ENCODE measurements at regions of chr17 and their contacts with region 1.

Region 1: GRCh38 chr17:63798572-63799106 is 24.7 kb downstream of the DDX42 start:
- DNase-seq: no peak
- ATAC-seq: no peak
- H3K4me3 ChIP-seq: no peak overlapping the region
- H3K27ac ChIP-seq: no peak overlapping the region
- H3K4me1 ChIP-seq: no peaks in the 10 kb centered on the region
- H3K27me3 ChIP-seq: no peaks in the 10 kb centered on the region
- CTCF ChIP-seq: no peak
- EP300 ChIP-seq: no peak
- POLR2A ChIP-seq: no peak
- RAD21 ChIP-seq: no peak

Region 2: GRCh38 chr17:63809970-63810369 is 11.3 kb after region 1 on chr17:
- CTCF ChIA-PET with region 1: no interaction called
- POLR2A ChIA-PET with region 1: interaction called, 10 read pairs
- in situ Hi-C with region 1: no loop called
- intact Hi-C with region 1: no loop called
- DNase-seq: no peak
- ATAC-seq: no peak
- H3K4me3 ChIP-seq: no peak overlapping the region
- H3K27ac ChIP-seq: no peak overlapping the region
- H3K4me1 ChIP-seq: no peaks in the 10 kb centered on the region
- H3K27me3 ChIP-seq: no peaks in the 10 kb centered on the region
- CTCF ChIP-seq: no peak
- EP300 ChIP-seq: no peak
- POLR2A ChIP-seq: no peak
- RAD21 ChIP-seq: no peak

Measured in K562 (cell line).